ENCODE measurements at regions of chr4 and their contacts with region 1.

Region 1: GRCh38 chr4:40749717-40750460 is at the start of gene NSUN7:
- DNase-seq: peak; percentile 75
- H3K4me3 ChIP-seq: peak within 1 kb of the TSS; percentile 39 to 62 (median 60)
- H3K27ac ChIP-seq: peak within 1 kb of the TSS; percentile 26 to 63 (median 48)
- H3K4me1 ChIP-seq: peaks cover 0 to 18% (median 9%) of the 10 kb centered on the region in 4 donors
- H3K27me3 ChIP-seq: no peaks in the 10 kb centered on the region
- CTCF ChIP-seq: no peak
- EP300 ChIP-seq: no peak
- POLR2A ChIP-seq: no peak
- total RNA-seq, gene NSUN7: 1.4 to 7.5 (median 3.3) TPM

Region 2: GRCh38 chr4:40840985-40841571 is 91.2 kb after region 1 on chr4:
- intact Hi-C with region 1: loop called (anchors 5 kb)
- DNase-seq: peak; percentile 66
- H3K4me3 ChIP-seq: no peak overlapping the region
- H3K27ac ChIP-seq: no peak overlapping the region
- H3K4me1 ChIP-seq: peaks cover 0 to 29% (median 13%) of the 10 kb centered on the region in 4 donors
- H3K27me3 ChIP-seq: no peaks in the 10 kb centered on the region
- CTCF ChIP-seq: peak in 2 of 4 experiments; percentile 10 to 44
- EP300 ChIP-seq: no peak
- POLR2A ChIP-seq: no peak

Measured in sigmoid colon (tissue), 7 donors.